ENCODE measurements at regions of chr9 and their contacts with region 1.

Region 1: DNA sequence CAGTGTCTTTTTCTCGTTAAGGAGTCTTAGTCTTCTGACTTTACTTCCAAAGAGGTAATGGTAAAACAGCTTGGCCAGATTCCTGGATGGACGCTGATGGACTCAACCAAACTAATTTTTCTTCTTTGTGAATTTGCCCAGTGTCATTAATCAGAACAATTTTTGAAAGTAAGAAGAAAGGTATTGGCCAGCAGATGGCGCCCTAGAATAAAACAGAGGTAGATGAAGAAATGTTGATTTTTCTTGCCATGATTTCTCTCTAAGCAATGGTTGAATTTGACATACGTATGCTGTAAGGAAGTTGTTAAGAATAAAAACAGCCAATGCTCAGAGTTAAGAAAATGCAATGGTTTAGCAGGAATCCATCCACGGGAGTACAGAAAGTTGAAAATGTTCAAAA is 500.0 kb downstream of the DIRAS2 start:
- DNase-seq: peak; percentile 35
- H3K4me3 ChIP-seq: no peak overlapping the region
- H3K27ac ChIP-seq: no peak overlapping the region
- H3K4me1 ChIP-seq: no peaks in the 10 kb centered on the region
- H3K27me3 ChIP-seq: peaks cover 2% of the 10 kb centered on the region
- CTCF ChIP-seq: peak; percentile 50 to 58

Region 2: GRCh38 chr9:89661956-89662717 is 480.4 kb before region 1 on chr9:
- CTCF ChIA-PET with region 1: no interaction called
- dilution Hi-C with region 1: no loop called
- in situ Hi-C with region 1: no loop called
- intact Hi-C with region 1: no loop called
- DNase-seq: peak; percentile 85
- H3K4me3 ChIP-seq: no peak overlapping the region
- H3K27ac ChIP-seq: no peak overlapping the region
- H3K4me1 ChIP-seq: peaks cover 5% of the 10 kb centered on the region
- H3K27me3 ChIP-seq: no peaks in the 10 kb centered on the region
- CTCF ChIP-seq: no peak

Region 3: GRCh38 chr9:89984214-89984613 is 158.4 kb before region 1 on chr9:
- CTCF ChIA-PET with region 1: no interaction called
- dilution Hi-C with region 1: no loop called
- in situ Hi-C with region 1: no loop called
- intact Hi-C with region 1: no loop called
- DNase-seq: peak; percentile 86
- H3K4me3 ChIP-seq: no peak overlapping the region
- H3K27ac ChIP-seq: peak overlapping the region; percentile 45
- H3K4me1 ChIP-seq: peaks cover 19% of the 10 kb centered on the region
- H3K27me3 ChIP-seq: no peaks in the 10 kb centered on the region
- CTCF ChIP-seq: no peak

Region 4: DNA sequence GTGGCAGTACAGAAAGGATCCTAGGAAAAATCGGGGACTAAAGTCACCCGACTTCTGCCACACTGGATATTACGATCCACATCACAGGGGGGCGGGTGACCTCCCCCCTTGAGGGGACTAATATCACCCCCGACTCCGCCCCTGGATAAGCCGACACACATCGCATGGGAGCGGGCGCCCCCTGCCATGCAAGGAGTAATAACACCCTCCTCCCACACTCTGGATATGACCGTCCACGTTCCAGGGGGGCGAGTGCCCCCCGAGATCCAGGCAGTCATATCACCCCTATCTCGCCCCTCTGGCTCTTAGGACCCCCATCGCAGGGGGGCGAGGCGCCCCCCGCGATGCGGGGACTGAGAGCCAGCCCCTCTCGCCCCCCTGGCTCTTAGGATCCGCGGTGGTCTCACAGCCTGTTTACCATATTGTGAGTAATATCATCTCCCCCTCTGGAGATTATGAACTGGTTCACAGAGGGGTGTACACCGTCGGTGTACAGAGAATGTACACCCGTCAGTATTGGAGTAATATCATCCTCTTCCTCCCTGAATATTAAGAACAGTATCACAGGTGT is 77.1 kb after region 1 on chr9:
- CTCF ChIA-PET with region 1: no interaction called
- dilution Hi-C with region 1: no loop called
- in situ Hi-C with region 1: no loop called
- intact Hi-C with region 1: loop called (anchors 1 kb)
- DNase-seq: no peak
- H3K4me3 ChIP-seq: no peak overlapping the region
- H3K27ac ChIP-seq: no peak overlapping the region
- H3K4me1 ChIP-seq: no peaks in the 10 kb centered on the region
- H3K27me3 ChIP-seq: no peaks in the 10 kb centered on the region
- CTCF ChIP-seq: peak in 1 of 2 donors; percentile 24

Region 5: DNA sequence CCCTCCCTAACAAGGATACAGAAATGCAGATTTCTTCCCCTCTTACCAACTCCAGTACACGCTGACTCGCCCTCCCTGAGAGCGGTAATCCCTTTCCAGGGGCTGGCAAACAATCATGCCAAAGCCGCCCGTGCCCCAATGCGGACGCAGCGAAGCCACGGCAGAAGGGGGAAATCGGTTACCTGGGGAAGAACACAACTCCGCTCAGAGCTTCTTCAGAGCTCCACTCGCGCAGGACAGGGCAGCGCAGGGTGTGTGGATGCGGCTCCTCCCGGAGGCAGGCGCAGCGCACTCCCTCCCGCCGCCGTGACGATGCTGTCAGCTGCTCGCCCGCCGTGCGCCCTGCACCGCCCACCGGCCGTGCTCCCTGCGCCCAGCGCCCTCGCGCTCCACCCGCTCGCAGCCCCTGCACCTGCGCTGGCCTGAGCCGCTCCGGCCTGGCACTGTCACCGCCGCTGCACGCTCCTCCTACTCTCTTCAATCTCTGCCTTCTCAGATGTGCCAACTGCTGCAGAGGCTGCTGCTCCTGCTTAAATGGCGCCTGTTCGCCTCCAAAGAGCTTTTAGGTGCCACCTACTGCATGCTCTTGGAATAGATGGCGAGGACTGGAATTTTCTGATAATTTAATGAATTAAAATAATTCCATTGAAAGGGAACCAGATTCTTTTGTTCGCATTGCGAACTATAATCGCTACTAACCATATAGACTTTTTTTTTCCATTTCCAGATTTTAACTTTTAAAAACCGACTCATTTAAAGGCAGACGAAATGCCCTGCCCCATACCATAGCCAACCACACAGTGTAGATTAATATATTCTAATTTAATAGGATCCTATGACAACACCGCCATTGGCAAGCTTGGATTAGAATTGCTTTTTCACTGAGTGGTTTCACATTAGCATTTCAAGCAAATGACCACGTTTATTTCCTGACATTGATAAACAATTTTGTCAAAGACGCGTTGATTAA is 500.3 kb after region 1 on chr9 and contains the start of gene DIRAS2:
- CTCF ChIA-PET with region 1: no interaction called
- dilution Hi-C with region 1: no loop called
- in situ Hi-C with region 1: no loop called
- intact Hi-C with region 1: loop called (anchors 5 kb)
- DNase-seq: peak; percentile 59
- H3K4me3 ChIP-seq: peak within 1 kb of the TSS; percentile 30 to 55 (median 51)
- H3K27ac ChIP-seq: no peak within 1 kb of the TSS
- H3K4me1 ChIP-seq: peaks cover 5% of the 10 kb centered on the region
- H3K27me3 ChIP-seq: peaks cover 13% of the 10 kb centered on the region
- CTCF ChIP-seq: peak; percentile 30 to 59
- total RNA-seq, gene DIRAS2: not detected

Region 6: GRCh38 chr9:90680534-90680933 is 538.0 kb after region 1 on chr9:
- CTCF ChIA-PET with region 1: no interaction called
- dilution Hi-C with region 1: no loop called
- in situ Hi-C with region 1: no loop called
- intact Hi-C with region 1: no loop called
- DNase-seq: no peak
- H3K4me3 ChIP-seq: no peak overlapping the region
- H3K27ac ChIP-seq: no peak overlapping the region
- H3K4me1 ChIP-seq: no peaks in the 10 kb centered on the region
- H3K27me3 ChIP-seq: peaks cover 2% of the 10 kb centered on the region
- CTCF ChIP-seq: no peak

Region 7: DNA sequence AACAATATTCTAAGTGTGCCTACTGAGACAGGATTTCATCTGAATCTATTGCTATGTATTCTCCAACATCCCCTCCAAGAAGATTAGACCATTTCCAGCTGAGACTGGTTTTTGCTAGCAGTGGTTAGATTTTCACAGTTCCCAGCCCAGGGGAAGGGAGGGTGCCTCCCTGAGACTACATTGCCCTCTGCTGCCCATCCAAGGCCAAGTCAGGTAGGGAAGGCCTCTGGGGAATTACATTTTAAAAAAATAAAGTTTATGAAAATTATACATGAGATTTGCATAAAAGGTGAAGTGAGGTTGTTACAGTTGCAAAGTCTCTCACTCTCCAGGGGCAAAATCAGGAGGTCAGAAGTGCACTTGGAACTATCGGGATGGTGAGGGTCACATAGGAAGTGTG is 631.0 kb after region 1 on chr9:
- CTCF ChIA-PET with region 1: no interaction called
- dilution Hi-C with region 1: no loop called
- in situ Hi-C with region 1: loop called (anchors 25 kb)
- intact Hi-C with region 1: loop called (anchors 5 kb)
- DNase-seq: peak; percentile 9
- H3K4me3 ChIP-seq: no peak overlapping the region
- H3K27ac ChIP-seq: no peak overlapping the region
- H3K4me1 ChIP-seq: peaks cover 3% of the 10 kb centered on the region
- H3K27me3 ChIP-seq: no peaks in the 10 kb centered on the region
- CTCF ChIP-seq: peak; percentile 47 to 61